ENCODE measurements at regions of chr4 and their contacts with region 1.

Region 1: GRCh38 chr4:7802093-7802726 is 137.5 kb downstream of the AFAP1 start:
- H3K4me3 ChIP-seq: no peak overlapping the region
- H3K27ac ChIP-seq: no peak overlapping the region
- H3K4me1 ChIP-seq: no peaks in the 10 kb centered on the region
- CTCF ChIP-seq: no peak

Region 2: DNA sequence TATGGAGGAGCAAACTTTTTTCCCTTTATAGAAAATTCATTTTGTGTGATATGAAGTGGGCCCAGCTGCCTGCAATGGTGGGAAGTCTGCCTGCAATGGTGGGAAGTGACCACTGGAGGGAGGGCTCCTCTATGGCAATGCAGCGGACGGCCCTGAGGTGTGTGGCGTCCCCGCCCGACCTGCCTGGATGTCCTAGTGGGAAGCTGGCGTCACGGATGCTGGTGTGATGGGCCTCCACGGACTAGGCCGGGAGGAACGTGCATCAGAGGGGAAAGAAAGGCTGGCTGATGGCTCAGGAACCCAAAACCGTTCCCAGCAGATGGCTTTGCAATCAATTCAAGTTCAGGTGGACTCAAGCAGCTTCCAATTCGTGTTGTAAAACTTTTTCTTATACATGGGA is 40.5 kb before region 1 on chr4:
- CTCF ChIA-PET with region 1: interaction called, 37 read pairs
- POLR2A ChIA-PET with region 1: no interaction called
- H3K4me3 ChIP-seq: no peak overlapping the region
- H3K27ac ChIP-seq: no peak overlapping the region
- H3K4me1 ChIP-seq: no peaks in the 10 kb centered on the region; the same call in 1 of the 2 replicates
- CTCF ChIP-seq: no peak

Region 3: GRCh38 chr4:7770224-7771050 is 31.8 kb before region 1 on chr4:
- CTCF ChIA-PET with region 1: interaction called, 39 read pairs
- POLR2A ChIA-PET with region 1: no interaction called
- H3K4me3 ChIP-seq: no peak overlapping the region
- H3K27ac ChIP-seq: no peak overlapping the region
- H3K4me1 ChIP-seq: no peaks in the 10 kb centered on the region
- CTCF ChIP-seq: 0 out of 2 replicates have a peak, but pooled peaks have one; percentile 32

Region 4: DNA sequence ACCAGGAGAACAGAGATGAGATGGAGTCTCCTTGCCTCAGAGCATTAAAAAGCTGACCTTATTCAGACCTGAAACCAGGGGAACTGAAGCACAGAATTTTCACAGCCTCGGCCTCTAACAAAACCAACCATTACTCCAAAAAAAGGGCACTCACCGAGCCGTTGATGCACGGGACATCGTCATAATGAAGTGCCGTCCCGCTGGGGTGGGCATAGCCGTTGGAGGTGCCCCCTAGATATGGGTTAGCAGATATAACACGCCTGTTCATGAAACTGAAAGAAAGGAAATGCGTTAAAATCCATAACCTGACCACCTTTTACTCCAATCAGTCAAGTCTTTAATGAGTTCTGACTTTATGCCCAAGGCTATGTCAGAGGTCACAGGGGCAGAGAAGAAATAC is 16.2 kb before region 1 on chr4:
- CTCF ChIA-PET with region 1: no interaction called
- POLR2A ChIA-PET with region 1: no interaction called
- H3K4me3 ChIP-seq: no peak overlapping the region
- H3K27ac ChIP-seq: no peak overlapping the region
- H3K4me1 ChIP-seq: no peaks in the 10 kb centered on the region
- CTCF ChIP-seq: no peak

Region 5: GRCh38 chr4:7813674-7814073 is 11.5 kb after region 1 on chr4:
- CTCF ChIA-PET with region 1: interaction called, 10 read pairs
- POLR2A ChIA-PET with region 1: no interaction called
- H3K4me3 ChIP-seq: no peak overlapping the region
- H3K27ac ChIP-seq: no peak overlapping the region
- H3K4me1 ChIP-seq: no peaks in the 10 kb centered on the region; the same call in 1 of the 2 replicates
- CTCF ChIP-seq: no peak

Region 6: GRCh38 chr4:7843831-7844593 is 41.8 kb after region 1 on chr4:
- CTCF ChIA-PET with region 1: interaction called, 24 read pairs
- POLR2A ChIA-PET with region 1: no interaction called
- H3K4me3 ChIP-seq: no peak overlapping the region
- H3K27ac ChIP-seq: no peak overlapping the region
- H3K4me1 ChIP-seq: no peaks in the 10 kb centered on the region
- CTCF ChIP-seq: peak; percentile 26; the same call in 1 of the 2 replicates

Region 7: GRCh38 chr4:7929118-7929951 is 127.1 kb after region 1 on chr4:
- CTCF ChIA-PET with region 1: interaction called, 73 read pairs
- POLR2A ChIA-PET with region 1: no interaction called
- H3K4me3 ChIP-seq: no peak overlapping the region
- H3K27ac ChIP-seq: no peak overlapping the region
- H3K4me1 ChIP-seq: no peaks in the 10 kb centered on the region
- CTCF ChIP-seq: no peak

Region 8: GRCh38 chr4:7987148-7987989 is 185.2 kb after region 1 on chr4:
- CTCF ChIA-PET with region 1: interaction called, 100 read pairs
- POLR2A ChIA-PET with region 1: no interaction called
- H3K4me3 ChIP-seq: no peak overlapping the region
- H3K27ac ChIP-seq: no peak overlapping the region
- H3K4me1 ChIP-seq: no peaks in the 10 kb centered on the region
- CTCF ChIP-seq: peak; percentile 53; the same call in 1 of the 2 replicates

Measured in HEK293 (cell line).